Activated naive CD4-positive, alpha-beta T cell treated with anti-CD3 and anti-CD28 coated beads for 36 hours (primary cell): ENCODE measurements at regions of chr12 and their contacts with region 1.

Region 1: GRCh38 chr12:47576289-47576945 is 129.4 kb downstream of the RPAP3 start:
- DNase-seq: no peak
- H3K4me3 Mint-ChIP-seq: no peak overlapping the region
- H3K27ac Mint-ChIP-seq: no peak overlapping the region
- H3K4me1 Mint-ChIP-seq: peaks cover 30% of the 10 kb centered on the region
- H3K27me3 Mint-ChIP-seq: no peaks in the 10 kb centered on the region

Region 2: DNA sequence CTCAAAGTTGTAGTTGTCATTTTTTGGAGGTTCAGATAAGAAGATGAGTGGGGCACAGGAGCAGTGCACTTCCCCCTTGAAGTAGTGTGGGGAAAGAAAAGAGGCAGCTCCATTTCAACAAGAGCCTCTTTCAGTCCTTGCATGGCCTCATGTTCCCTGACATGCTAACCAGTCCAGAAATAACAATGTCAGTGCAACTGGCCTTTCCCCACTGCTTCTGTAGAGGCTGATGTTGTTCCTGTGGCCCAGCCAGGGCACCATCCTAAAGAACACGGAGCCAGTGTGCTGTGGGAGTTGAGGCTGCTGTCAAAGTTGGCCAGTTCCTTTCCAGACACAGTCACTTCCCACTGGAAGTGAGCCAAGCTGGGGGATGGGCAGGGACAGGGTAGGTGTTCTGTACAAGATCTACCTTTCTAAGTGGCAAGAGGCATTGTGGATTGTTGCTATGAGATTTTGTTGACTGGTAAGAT is 1126.1 kb before region 1 on chr12:
- CTCF ChIA-PET with region 1: no interaction called
- intact Hi-C with region 1: loop called (anchors 10 kb)
- DNase-seq: peak; percentile 34
- H3K4me3 Mint-ChIP-seq: no peak overlapping the region
- H3K27ac Mint-ChIP-seq: peak overlapping the region; percentile 47
- H3K4me1 Mint-ChIP-seq: peaks cover 49% of the 10 kb centered on the region
- H3K27me3 Mint-ChIP-seq: no peaks in the 10 kb centered on the region

Region 3: GRCh38 chr12:46872135-46872534 is 704.3 kb before region 1 on chr12:
- CTCF ChIA-PET with region 1: no interaction called
- intact Hi-C with region 1: no loop called
- DNase-seq: no peak
- H3K4me3 Mint-ChIP-seq: no peak overlapping the region
- H3K27ac Mint-ChIP-seq: no peak overlapping the region
- H3K4me1 Mint-ChIP-seq: no peaks in the 10 kb centered on the region
- H3K27me3 Mint-ChIP-seq: peaks cover 9% of the 10 kb centered on the region